ENCODE measurements at regions of chr17 and their contacts with region 1.

Region 1: DNA sequence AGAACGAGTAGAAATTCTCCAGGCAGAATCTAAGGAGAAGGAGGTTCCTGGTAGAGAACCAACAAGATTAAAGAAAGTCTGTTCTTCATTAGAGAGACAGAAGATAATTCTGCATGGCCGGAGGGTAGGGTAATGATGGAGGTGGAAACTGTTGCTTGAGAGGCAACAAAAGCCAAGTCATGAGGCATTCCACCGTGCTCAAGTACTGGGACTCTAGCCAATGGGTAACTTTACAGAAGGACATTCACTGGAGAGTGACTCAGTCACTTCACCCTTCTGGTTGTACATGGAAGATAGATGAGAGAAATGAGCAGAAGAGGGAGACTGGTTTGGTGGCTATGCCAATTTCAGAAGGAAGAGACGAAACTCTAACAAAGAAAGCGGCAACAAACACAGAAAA is 53.6 kb upstream of the ANKFN1 start:
- DNase-seq: no peak
- ATAC-seq: no peak
- H3K4me3 Mint-ChIP-seq: no peak overlapping the region
- H3K27ac Mint-ChIP-seq: no peak overlapping the region
- H3K4me1 Mint-ChIP-seq: no peaks in the 10 kb centered on the region
- H3K27me3 Mint-ChIP-seq: peaks cover 4% of the 10 kb centered on the region

Region 2: DNA sequence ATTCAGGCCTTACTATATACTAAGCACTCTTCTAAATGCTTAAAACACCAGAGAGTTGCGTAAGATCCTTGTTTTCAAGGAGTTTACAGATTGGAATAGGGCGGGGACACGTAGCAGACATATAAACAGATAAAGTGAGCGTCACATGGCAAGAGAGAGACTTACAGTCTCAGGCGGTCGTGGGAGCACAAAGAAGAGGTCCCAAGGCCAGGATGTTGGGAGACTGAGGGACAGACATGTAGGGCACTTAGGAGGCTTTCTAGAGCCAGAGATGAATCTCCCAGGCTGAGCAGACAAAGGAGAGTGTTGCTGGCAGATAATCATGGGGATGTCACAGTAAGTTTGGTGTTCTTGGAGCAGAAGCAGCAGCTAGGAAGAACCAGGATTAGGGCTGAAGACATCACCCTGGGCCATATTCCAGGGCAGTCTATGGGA is 65.4 kb before region 1 on chr17:
- CTCF ChIA-PET with region 1: no interaction called
- POLR2A ChIA-PET with region 1: no interaction called
- intact Hi-C with region 1: loop called in 1 of 2 experiments (anchors 10 kb)
- DNase-seq: no peak
- ATAC-seq: no peak
- H3K4me3 Mint-ChIP-seq: no peak overlapping the region
- H3K27ac Mint-ChIP-seq: no peak overlapping the region
- H3K4me1 Mint-ChIP-seq: peaks cover 2% of the 10 kb centered on the region
- H3K27me3 Mint-ChIP-seq: peaks cover 22% of the 10 kb centered on the region

Measured in activated CD4-positive, alpha-beta T cell treated with anti-CD3 and anti-CD28 coated beads for 36 hours (primary cell).